GM10248 (cell line): ENCODE measurements at regions of chr15 and their contacts with region 1.

Region 1: DNA sequence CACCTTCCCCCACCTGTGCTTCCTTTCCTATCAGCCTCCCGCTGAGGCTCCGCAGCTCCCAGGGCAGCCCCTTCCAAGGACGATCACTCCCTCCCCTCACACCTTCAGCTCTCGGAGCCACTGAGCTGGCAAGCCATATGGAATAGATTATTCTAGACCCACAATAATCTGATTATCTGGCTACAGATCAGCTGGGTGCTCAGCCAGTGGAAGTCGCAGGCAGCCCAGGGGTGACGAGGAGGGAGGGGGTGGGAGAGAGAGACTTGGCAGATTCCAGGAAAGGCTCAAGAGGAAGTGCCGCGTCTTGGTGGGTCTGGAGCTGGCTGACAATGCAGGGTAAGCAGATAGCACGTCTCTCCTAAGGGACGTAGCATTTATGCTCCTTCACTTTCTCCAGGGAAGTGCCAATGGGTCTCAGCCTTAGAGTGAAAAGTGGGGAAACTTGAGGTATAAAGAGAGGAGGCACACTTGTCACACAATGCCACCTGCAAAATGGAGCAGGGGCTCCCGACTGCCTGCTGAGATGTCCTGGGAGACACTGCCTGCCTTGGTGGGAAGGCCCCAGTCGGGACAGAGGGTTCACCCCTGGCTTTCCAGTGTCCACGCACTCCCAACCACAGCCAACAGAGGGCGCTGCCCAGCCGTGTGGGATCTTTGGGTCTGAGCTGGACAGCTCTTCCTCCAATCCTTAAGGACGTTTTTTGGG is 9.4 kb upstream of the MESP1 start:
- DNase-seq: peak; percentile 88
- CTCF ChIP-seq: peak; percentile 100

Region 2: DNA sequence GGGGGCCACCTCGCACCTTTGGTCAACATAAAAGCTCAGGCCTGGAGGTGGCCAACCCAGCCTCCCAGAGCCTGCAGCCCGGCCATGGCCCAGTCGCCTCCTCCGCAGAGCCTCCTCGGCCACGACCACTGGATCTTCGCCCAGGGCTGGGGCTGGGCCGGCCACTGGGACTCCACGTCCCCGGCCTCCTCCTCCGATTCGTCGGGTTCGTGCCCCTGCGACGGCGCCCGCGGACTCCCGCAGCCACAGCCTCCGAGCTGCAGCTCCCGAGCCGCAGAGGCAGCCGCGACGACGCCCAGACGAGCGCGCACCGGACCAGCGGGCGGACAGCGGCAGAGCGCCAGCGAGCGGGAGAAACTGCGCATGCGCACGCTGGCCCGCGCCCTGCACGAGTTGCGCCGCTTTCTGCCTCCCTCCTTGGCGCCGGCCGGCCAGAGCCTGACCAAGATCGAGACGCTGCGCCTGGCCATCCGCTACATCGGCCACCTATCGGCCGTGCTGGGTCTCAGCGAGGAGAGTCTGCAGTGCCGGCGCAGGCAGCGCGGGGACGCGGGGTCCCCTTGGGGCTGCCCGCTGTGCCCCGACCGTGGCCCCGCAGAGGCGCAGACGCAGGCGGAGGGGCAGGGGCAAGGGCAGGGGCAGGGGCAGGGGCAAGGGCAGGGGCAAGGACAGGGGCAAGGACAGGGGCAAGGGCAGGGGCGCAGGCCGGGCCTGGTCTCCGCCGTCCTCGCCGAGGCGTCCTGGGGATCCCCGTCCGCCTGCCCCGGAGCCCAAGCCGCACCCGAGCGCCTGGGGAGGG is 16.0 kb after region 1 on chr15 and contains the start of gene MESP2:
- CTCF ChIA-PET with region 1: interaction called, 87 read pairs
- POLR2A ChIA-PET with region 1: no interaction called
- DNase-seq: peak; percentile 90
- CTCF ChIP-seq: peak; percentile 28

Region 3: DNA sequence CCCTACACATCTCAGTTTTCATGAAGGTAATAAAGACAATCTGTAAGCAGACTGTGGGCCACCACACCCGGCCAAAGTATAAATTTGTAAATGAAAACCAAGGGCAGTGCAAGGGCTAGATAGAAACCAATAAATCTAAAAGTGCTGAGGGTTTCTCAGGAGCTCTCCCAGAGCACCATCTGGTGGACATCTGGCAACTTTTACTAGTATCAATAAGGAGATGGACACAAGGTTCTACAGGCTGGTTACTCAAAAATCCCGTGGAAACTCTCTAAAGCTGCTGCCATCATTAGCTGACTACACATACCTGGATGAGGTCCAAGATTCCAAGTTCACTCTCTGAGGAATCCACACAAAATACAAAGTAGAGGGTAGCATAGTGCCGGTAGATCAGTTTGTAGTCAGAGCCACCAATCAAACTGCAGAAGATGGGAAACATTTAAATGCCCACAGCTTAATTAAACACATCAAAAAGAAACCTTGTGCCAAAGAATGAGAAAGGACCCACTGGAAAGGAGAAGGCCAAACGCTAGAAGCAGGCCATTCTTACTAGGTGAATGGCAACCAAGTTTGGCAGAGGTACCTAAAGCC is 127.9 kb after region 1 on chr15:
- CTCF ChIA-PET with region 1: interaction called, 60 read pairs
- POLR2A ChIA-PET with region 1: no interaction called
- DNase-seq: no peak
- CTCF ChIP-seq: no peak

Region 4: GRCh38 chr15:89971592-89971997 is 211.1 kb after region 1 on chr15:
- CTCF ChIA-PET with region 1: interaction called, 11 read pairs
- POLR2A ChIA-PET with region 1: no interaction called
- DNase-seq: peak; percentile 73
- CTCF ChIP-seq: peak; percentile 51

Region 5: GRCh38 chr15:90086868-90087268 is 326.4 kb after region 1 on chr15:
- CTCF ChIA-PET with region 1: interaction called, 30 read pairs
- POLR2A ChIA-PET with region 1: no interaction called
- DNase-seq: peak; percentile 71
- CTCF ChIP-seq: peak; percentile 71